CD4-positive, alpha-beta T cell (primary cell): ENCODE measurements at regions of chr3 and their contacts with region 1.

Region 1: DNA sequence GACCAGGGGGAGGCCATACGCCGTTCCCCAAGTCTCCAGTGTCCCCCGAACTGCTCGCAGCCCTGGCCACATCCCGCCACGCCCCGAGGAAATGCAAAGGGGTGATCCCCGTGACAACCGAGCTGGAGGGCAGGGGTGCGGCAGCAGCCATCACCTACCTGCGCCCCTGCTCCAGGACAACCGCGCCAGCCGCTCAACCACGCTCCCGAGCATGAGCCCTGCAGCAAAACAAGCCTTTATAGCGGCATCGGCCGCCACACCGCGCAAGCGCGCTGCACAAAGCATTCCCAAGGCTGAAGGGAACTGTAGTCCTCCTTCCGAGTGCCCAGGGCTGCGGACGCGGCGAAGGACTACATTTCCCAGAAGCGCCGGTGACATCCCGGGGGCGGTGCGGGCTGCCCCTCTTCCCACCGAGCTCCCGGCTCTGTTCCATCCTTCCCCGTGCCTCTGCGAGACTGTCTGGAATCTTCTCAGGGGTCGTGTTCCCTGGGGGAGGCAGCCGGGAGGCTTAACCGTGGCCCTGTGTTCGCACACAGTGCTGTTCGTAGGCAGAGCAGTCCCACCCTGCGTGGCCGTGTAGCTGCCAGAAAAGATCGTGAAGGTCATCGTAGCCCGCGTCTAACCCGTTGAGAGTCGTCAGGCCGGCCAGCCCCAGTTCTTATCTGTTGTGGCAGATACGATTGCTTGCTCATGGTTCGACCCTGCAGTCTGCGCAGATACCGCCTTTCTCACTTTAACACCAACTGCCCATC is at the start of gene ABCC5:
- DNase-seq: peak; percentile 65 to 92 (median 78)
- ATAC-seq: peak; percentile 94
- H3K4me3 ChIP-seq: peak within 1 kb of the TSS; percentile 96
- H3K4me3 Mint-ChIP-seq: peak within 1 kb of the TSS; percentile 100
- H3K27ac ChIP-seq: peak within 1 kb of the TSS; percentile 23 to 43
- H3K27ac Mint-ChIP-seq: peak within 1 kb of the TSS; percentile 66
- H3K4me1 ChIP-seq: peaks cover 16% of the 10 kb centered on the region
- H3K4me1 Mint-ChIP-seq: peaks cover 26% of the 10 kb centered on the region
- H3K27me3 ChIP-seq: peaks cover 0 to 3% of the 10 kb centered on the region in 2 experiments
- H3K27me3 Mint-ChIP-seq: peaks cover 5% of the 10 kb centered on the region
- CTCF ChIP-seq: peak; percentile 89
- total RNA-seq, gene ABCC5: 10.8 to 11.4 TPM

Region 2: GRCh38 chr3:183895296-183895695 is 122.6 kb before region 1 on chr3:
- CTCF ChIA-PET with region 1: interaction called, 5 read pairs
- POLR2A ChIA-PET with region 1: no interaction called
- intact Hi-C with region 1: loop called (anchors 1 to 2 kb)
- DNase-seq: peak in 9 of 14 experiments; percentile 6 to 76 (median 20)
- ATAC-seq: peak; percentile 88
- H3K4me3 ChIP-seq: no peak overlapping the region
- H3K4me3 Mint-ChIP-seq: no peak overlapping the region
- H3K27ac ChIP-seq: no peak overlapping the region
- H3K27ac Mint-ChIP-seq: no peak overlapping the region
- H3K4me1 ChIP-seq: peaks cover 4% of the 10 kb centered on the region
- H3K4me1 Mint-ChIP-seq: no peaks in the 10 kb centered on the region
- H3K27me3 ChIP-seq: peaks cover 5 to 6% of the 10 kb centered on the region in 2 experiments
- H3K27me3 Mint-ChIP-seq: peaks cover 13% of the 10 kb centered on the region
- CTCF ChIP-seq: peak; percentile 75

Region 3: DNA sequence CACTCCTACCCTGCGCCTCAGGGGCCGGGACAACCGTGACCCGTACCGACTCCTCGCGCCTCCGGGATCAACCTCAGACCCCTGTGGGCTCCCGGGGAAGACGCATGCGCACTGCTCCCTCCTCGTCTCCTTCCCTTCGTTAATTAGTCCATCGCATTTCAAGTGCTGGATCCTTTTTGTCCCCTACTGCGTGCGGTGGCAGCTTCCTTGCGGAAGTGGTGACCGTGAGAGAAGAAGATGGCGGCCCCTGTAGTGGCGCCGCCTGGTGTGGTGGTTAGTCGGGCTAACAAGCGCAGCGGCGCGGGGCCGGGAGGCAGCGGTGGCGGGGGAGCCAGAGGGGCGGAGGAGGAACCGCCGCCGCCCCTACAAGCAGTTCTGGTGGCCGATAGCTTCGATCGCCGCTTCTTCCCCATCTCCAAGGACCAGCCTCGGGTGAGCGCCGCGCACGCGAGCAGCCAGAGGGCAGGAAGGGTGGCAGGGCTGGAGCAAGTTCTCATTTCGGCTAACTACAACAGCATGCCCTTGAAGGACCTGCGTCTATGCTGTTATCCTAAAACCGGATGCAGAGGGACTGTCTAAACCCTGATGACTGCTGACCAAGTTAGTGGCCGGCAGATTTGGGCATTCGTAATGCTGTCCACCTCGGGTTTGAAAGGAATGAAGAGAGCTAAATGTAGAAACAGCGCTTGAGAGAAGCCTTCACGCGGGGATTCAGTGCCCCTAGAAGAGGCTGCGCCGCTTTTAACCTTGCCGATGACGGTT is 117.5 kb after region 1 on chr3 and contains the start of gene EIF2B5:
- CTCF ChIA-PET with region 1: no interaction called
- POLR2A ChIA-PET with region 1: interaction called, 8 read pairs
- intact Hi-C with region 1: loop called in 1 of 2 experiments (anchors 5 kb)
- DNase-seq: peak; percentile 72 to 95 (median 82)
- ATAC-seq: peak; percentile 88
- H3K4me3 ChIP-seq: peak within 1 kb of the TSS; percentile 99
- H3K4me3 Mint-ChIP-seq: peak within 1 kb of the TSS; percentile 99
- H3K27ac ChIP-seq: peak within 1 kb of the TSS; percentile 71 to 76
- H3K27ac Mint-ChIP-seq: peak within 1 kb of the TSS; percentile 97
- H3K4me1 ChIP-seq: peaks cover 29% of the 10 kb centered on the region
- H3K4me1 Mint-ChIP-seq: peaks cover 50% of the 10 kb centered on the region
- H3K27me3 ChIP-seq: no peaks in the 10 kb centered on the region
- H3K27me3 Mint-ChIP-seq: no peaks in the 10 kb centered on the region
- CTCF ChIP-seq: peak; percentile 31
- total RNA-seq, gene EIF2B5: 53.6 TPM

Region 4: DNA sequence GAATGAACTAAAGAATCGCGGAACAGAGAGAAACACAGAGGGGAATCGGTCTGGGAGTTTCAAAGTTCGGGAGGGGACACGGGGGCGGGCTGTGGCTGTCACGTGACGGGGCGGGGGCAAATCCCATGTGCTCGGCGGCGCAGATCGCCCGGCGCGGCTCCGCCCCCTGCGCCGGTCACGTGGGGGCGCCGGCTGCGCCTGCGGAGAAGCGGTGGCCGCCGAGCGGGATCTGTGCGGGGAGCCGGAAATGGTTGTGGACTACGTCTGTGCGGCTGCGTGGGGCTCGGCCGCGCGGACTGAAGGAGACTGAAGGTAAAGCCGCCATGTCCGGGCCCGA is 296.5 kb after region 1 on chr3 and contains the start of gene EIF4G1:
- CTCF ChIA-PET with region 1: no interaction called
- POLR2A ChIA-PET with region 1: no interaction called
- intact Hi-C with region 1: loop called in 1 of 2 experiments (anchors 5 kb)
- DNase-seq: peak; percentile 84 to 98 (median 90)
- ATAC-seq: peak; percentile 83
- H3K4me3 ChIP-seq: peak within 1 kb of the TSS; percentile 77
- H3K4me3 Mint-ChIP-seq: peak within 1 kb of the TSS; percentile 94
- H3K27ac ChIP-seq: peak within 1 kb of the TSS; percentile 84 to 95
- H3K27ac Mint-ChIP-seq: peak within 1 kb of the TSS; percentile 95
- H3K4me1 ChIP-seq: peaks cover 38% of the 10 kb centered on the region
- H3K4me1 Mint-ChIP-seq: peaks cover 27% of the 10 kb centered on the region
- H3K27me3 ChIP-seq: no peaks in the 10 kb centered on the region
- H3K27me3 Mint-ChIP-seq: no peaks in the 10 kb centered on the region
- CTCF ChIP-seq: no peak
- total RNA-seq, gene EIF4G1: 211 to 217 TPM